Naive thymus-derived CD4-positive, alpha-beta T cell (primary cell): ENCODE measurements at regions of chr12 and their contacts with region 1.

Region 1: GRCh38 chr12:132153501-132154340 is 9.5 kb downstream of the NOC4L start:
- DNase-seq: peak; percentile 63 to 82 (median 76)
- ATAC-seq: peak; percentile 93
- H3K4me3 ChIP-seq: no peak overlapping the region
- H3K4me3 Mint-ChIP-seq: peak overlapping the region in 5 of 10 donors; percentile 9 to 74 (median 54)
- H3K27ac ChIP-seq: no peak overlapping the region
- H3K27ac Mint-ChIP-seq: peak overlapping the region in 2 of 9 donors; percentile 38 to 64
- H3K4me1 ChIP-seq: peaks cover 0 to 4% of the 10 kb centered on the region in 2 donors
- H3K4me1 Mint-ChIP-seq: peaks cover 0 to 4% (median 0%) of the 10 kb centered on the region in 7 donors
- H3K27me3 ChIP-seq: no peaks in the 10 kb centered on the region
- H3K27me3 Mint-ChIP-seq: no peaks in the 10 kb centered on the region

Region 2: GRCh38 chr12:131860562-131861291 is 293.0 kb before region 1 on chr12:
- CTCF ChIA-PET with region 1: no interaction called
- POLR2A ChIA-PET with region 1: no interaction called
- intact Hi-C with region 1: no loop called
- DNase-seq: peak in 1 of 9 donors; percentile 42
- ATAC-seq: peak; percentile 88
- H3K4me3 ChIP-seq: no peak overlapping the region
- H3K4me3 Mint-ChIP-seq: no peak overlapping the region
- H3K27ac ChIP-seq: no peak overlapping the region
- H3K27ac Mint-ChIP-seq: peak overlapping the region in 1 of 9 donors; percentile 29
- H3K4me1 ChIP-seq: no peaks in the 10 kb centered on the region
- H3K4me1 Mint-ChIP-seq: peaks cover 0 to 13% (median 4%) of the 10 kb centered on the region in 7 donors
- H3K27me3 ChIP-seq: no peaks in the 10 kb centered on the region
- H3K27me3 Mint-ChIP-seq: peaks cover 0 to 8% (median 0%) of the 10 kb centered on the region in 5 donors

Region 3: DNA sequence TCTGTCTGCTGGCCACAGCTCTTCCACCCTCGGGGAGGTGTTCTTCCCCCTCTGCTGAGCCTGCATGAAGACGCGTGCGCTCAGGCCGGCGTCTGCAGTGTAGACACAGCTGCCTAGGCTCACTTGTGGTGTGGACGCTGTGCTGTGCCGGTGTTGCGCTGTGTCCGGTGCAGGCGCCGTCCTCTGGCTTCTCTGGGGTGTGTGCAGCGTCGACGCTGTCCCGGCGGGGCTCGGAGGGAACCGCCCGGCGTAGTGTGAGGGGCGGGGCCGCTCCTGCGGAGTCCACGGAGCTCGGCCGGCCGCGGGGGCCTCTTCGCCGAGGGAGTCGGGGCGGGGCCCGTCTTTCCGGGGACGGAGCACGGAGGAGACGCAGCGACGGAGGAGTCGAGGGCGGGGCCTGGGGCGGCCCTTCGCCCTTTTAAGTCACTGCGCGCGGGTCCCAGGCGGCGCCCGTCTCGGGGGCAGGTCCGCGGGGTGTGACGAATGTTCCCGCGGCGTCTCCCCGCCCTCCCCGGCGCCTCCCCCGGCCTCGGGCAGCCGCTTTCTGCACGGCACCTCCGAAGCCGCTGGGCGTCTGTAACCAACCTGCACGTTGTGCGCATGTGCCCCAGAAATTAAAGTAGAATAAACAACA is 35.8 kb after region 1 on chr12:
- CTCF ChIA-PET with region 1: interaction called, 5 read pairs
- POLR2A ChIA-PET with region 1: interaction called, 9 read pairs
- intact Hi-C with region 1: loop called in 1 of 2 experiments (anchors 1 kb)
- DNase-seq: peak; percentile 86 to 95 (median 93)
- ATAC-seq: peak; percentile 93
- H3K4me3 ChIP-seq: peak overlapping the region; percentile 71
- H3K4me3 Mint-ChIP-seq: peak overlapping the region; percentile 80 to 99 (median 96)
- H3K27ac ChIP-seq: peak overlapping the region; percentile 82
- H3K27ac Mint-ChIP-seq: peak overlapping the region; percentile 86 to 99 (median 96)
- H3K4me1 ChIP-seq: peaks cover 20 to 39% of the 10 kb centered on the region in 2 donors
- H3K4me1 Mint-ChIP-seq: peaks cover 15 to 55% (median 40%) of the 10 kb centered on the region in 7 donors
- H3K27me3 ChIP-seq: no peaks in the 10 kb centered on the region
- H3K27me3 Mint-ChIP-seq: peaks cover 0 to 7% (median 0%) of the 10 kb centered on the region in 5 donors

Region 4: GRCh38 chr12:132218915-132219314 is 65.2 kb after region 1 on chr12:
- CTCF ChIA-PET with region 1: interaction called, 16 read pairs
- POLR2A ChIA-PET with region 1: interaction called, 4 read pairs
- intact Hi-C with region 1: loop called (anchors 1 kb)
- DNase-seq: peak in 7 of 9 donors; percentile 40 to 67 (median 57)
- ATAC-seq: peak; percentile 66
- H3K4me3 ChIP-seq: no peak overlapping the region
- H3K4me3 Mint-ChIP-seq: no peak overlapping the region
- H3K27ac ChIP-seq: no peak overlapping the region
- H3K27ac Mint-ChIP-seq: peak overlapping the region in 3 of 9 donors; percentile 4 to 55 (median 38)
- H3K4me1 ChIP-seq: peaks cover 6 to 10% of the 10 kb centered on the region in 2 donors
- H3K4me1 Mint-ChIP-seq: peaks cover 8 to 24% (median 13%) of the 10 kb centered on the region in 7 donors
- H3K27me3 ChIP-seq: no peaks in the 10 kb centered on the region
- H3K27me3 Mint-ChIP-seq: peaks cover 0 to 12% (median 8%) of the 10 kb centered on the region in 5 donors

Region 5: DNA sequence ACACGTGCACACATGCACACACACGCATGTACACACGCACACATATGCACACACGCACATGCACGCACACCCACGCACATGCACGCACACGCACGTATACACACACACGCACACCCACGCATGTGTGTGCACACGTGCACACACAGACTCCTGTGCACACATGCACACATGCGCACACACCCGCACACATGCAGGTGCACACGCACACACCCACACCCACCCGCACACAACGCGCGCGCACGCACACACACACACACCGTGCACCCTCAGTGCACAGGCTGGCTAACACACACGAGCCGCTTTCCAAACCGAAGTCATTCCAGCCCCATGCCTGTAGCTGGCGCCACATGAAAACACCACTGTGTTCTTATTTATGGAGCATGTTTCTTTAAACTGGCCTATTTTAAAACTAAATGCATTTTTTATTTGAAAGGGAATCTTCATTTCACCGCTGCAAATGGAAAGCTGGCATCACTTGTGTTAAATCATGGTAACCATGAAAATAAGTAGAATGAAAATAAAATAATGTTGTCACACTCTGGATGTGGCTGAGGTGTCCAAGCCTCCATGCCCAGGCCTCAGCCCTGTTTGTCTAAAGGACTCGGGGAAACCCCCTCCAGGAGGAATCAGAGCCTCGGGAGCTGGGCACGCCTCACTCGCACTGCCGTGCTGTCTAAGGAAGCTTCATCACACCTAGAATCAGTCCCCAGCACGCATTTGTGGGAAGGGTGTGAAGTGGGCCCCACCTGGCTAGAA is 130.5 kb after region 1 on chr12:
- CTCF ChIA-PET with region 1: interaction called, 4 read pairs
- POLR2A ChIA-PET with region 1: no interaction called
- intact Hi-C with region 1: loop called in 1 of 2 experiments (anchors 5 kb)
- DNase-seq: peak in 1 of 9 donors; percentile 20
- ATAC-seq: peak; percentile 20
- H3K4me3 ChIP-seq: no peak overlapping the region
- H3K4me3 Mint-ChIP-seq: peak overlapping the region in 7 of 10 donors; percentile 49 to 76 (median 63)
- H3K27ac ChIP-seq: no peak overlapping the region
- H3K27ac Mint-ChIP-seq: no peak overlapping the region
- H3K4me1 ChIP-seq: peaks cover 7 to 18% of the 10 kb centered on the region in 2 donors
- H3K4me1 Mint-ChIP-seq: peaks cover 0 to 26% (median 12%) of the 10 kb centered on the region in 7 donors
- H3K27me3 ChIP-seq: no peaks in the 10 kb centered on the region
- H3K27me3 Mint-ChIP-seq: peaks cover 18 to 30% (median 25%) of the 10 kb centered on the region in 5 donors

Region 6: GRCh38 chr12:132414634-132415326 is 261.1 kb after region 1 on chr12:
- CTCF ChIA-PET with region 1: interaction called, 7 read pairs
- POLR2A ChIA-PET with region 1: no interaction called
- intact Hi-C with region 1: loop called (anchors 1 kb)
- DNase-seq: peak; percentile 54 to 82 (median 68)
- ATAC-seq: peak; percentile 92
- H3K4me3 ChIP-seq: no peak overlapping the region
- H3K4me3 Mint-ChIP-seq: peak overlapping the region in 4 of 10 donors; percentile 25 to 43 (median 35)
- H3K27ac ChIP-seq: no peak overlapping the region
- H3K27ac Mint-ChIP-seq: no peak overlapping the region
- H3K4me1 ChIP-seq: peaks cover 5 to 15% of the 10 kb centered on the region in 2 donors
- H3K4me1 Mint-ChIP-seq: peaks cover 0 to 5% (median 3%) of the 10 kb centered on the region in 7 donors
- H3K27me3 ChIP-seq: no peaks in the 10 kb centered on the region
- H3K27me3 Mint-ChIP-seq: peaks cover 0 to 9% (median 0%) of the 10 kb centered on the region in 5 donors

Region 7: GRCh38 chr12:132560614-132561426 is 407.1 kb after region 1 on chr12:
- CTCF ChIA-PET with region 1: no interaction called
- POLR2A ChIA-PET with region 1: no interaction called
- intact Hi-C with region 1: loop called in 1 of 2 experiments (anchors 2 kb)
- DNase-seq: peak; percentile 47 to 82 (median 63)
- ATAC-seq: peak; percentile 64
- H3K4me3 ChIP-seq: peak overlapping the region; percentile 37
- H3K4me3 Mint-ChIP-seq: peak overlapping the region; percentile 41 to 80 (median 69)
- H3K27ac ChIP-seq: no peak overlapping the region
- H3K27ac Mint-ChIP-seq: no peak overlapping the region
- H3K4me1 ChIP-seq: peaks cover 7 to 25% of the 10 kb centered on the region in 2 donors
- H3K4me1 Mint-ChIP-seq: peaks cover 4 to 25% (median 17%) of the 10 kb centered on the region in 7 donors
- H3K27me3 ChIP-seq: no peaks in the 10 kb centered on the region
- H3K27me3 Mint-ChIP-seq: peaks cover 0 to 15% (median 8%) of the 10 kb centered on the region in 5 donors